PC-3 (cell line): ENCODE measurements at regions of chr9 and their contacts with region 1.

Region 1: GRCh38 chr9:37913480-37914153 is 9.7 kb upstream of the SLC25A51 start:
- DNase-seq: peak; percentile 86
- ATAC-seq: peak; percentile 76
- H3K4me3 ChIP-seq: no peak overlapping the region
- H3K27ac ChIP-seq: peak overlapping the region; percentile 52
- H3K4me1 ChIP-seq: peaks cover 7% of the 10 kb centered on the region
- H3K27me3 ChIP-seq: no peaks in the 10 kb centered on the region
- CTCF ChIP-seq: peak; percentile 93

Region 2: DNA sequence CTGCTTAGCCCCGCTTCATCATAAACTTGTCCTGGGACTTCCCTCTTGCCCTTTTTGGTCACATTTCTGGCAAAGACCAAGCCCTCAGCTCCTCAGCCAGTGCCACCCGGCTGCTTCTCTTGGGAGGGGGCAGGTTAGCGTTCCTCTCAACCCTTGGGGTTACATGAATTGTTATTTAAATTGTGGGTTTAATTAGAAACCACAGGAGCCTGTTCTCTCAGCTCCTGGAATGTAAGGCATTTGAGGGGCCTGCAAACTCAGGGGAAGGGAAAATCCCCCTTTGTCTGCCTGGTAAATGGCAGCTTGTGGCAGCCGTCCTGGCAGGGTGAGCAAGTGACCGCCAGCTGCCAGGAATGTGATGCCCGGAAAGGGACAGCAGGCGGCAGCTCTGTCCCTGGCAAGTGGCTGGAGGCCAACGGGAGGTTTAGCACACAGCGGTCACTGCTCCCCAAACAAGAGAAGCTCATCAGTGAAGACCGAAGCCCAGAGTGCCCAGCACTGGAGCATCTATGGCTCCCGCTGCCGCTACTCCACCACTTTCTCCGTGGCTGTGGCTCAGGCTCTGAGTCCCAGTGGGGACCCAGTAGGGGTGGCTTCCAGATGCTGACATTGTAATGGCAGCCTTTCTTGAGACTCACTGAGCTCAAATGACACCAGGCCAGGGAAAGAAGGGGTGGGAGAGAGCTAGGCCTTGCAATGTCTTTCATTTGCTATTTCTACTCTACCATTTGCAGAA is 103.7 kb after region 1 on chr9:
- CTCF ChIA-PET with region 1: interaction called, 3 read pairs
- POLR2A ChIA-PET with region 1: no interaction called
- intact Hi-C with region 1: loop called (anchors 5 kb)
- DNase-seq: peak; percentile 60
- ATAC-seq: peak; percentile 43
- H3K4me3 ChIP-seq: peak overlapping the region; percentile 11; the same call in 1 of the 2 replicates
- H3K27ac ChIP-seq: peak overlapping the region; percentile 97
- H3K4me1 ChIP-seq: peaks cover 62% of the 10 kb centered on the region
- H3K27me3 ChIP-seq: no peaks in the 10 kb centered on the region
- CTCF ChIP-seq: peak; percentile 55

Region 3: GRCh38 chr9:38068866-38069629 is 155.4 kb after region 1 on chr9 and contains the start of gene SHB:
- CTCF ChIA-PET with region 1: no interaction called
- POLR2A ChIA-PET with region 1: interaction called, 3 read pairs
- intact Hi-C with region 1: loop called (anchors 1 kb)
- DNase-seq: peak; percentile 59
- ATAC-seq: peak; percentile 41
- H3K4me3 ChIP-seq: peak within 1 kb of the TSS; percentile 95
- H3K27ac ChIP-seq: peak within 1 kb of the TSS; percentile 77
- H3K4me1 ChIP-seq: peaks cover 34% of the 10 kb centered on the region
- H3K27me3 ChIP-seq: no peaks in the 10 kb centered on the region
- CTCF ChIP-seq: 0 out of 2 replicates have a peak, but pooled peaks have one; percentile 17
- total RNA-seq, gene SHB: 56.4 and 77.1 TPM in 2 replicates

Region 4: DNA sequence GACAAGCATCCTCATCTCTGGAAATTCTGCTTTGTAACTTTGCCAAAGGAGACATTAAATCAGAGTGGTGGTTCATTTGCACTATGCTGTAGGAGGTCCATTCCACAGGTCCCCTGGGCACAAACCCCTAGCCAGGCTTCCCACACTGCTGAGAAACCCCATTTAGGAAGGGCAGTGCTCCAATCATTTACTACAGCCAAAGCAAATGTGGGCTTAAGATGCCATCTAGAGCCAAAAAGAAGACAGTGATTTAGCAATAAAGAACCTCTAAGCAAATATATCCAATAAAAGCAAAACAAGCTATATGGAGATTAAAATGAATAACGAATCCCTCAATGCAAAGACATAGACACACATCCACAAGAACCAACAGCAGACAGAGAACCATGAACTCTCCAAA is 349.9 kb after region 1 on chr9:
- CTCF ChIA-PET with region 1: interaction called, 3 read pairs
- POLR2A ChIA-PET with region 1: no interaction called
- intact Hi-C with region 1: loop called (anchors 2 kb)
- DNase-seq: peak; percentile 52
- ATAC-seq: peak; percentile 31; the same call in 1 of the 2 replicates
- H3K4me3 ChIP-seq: no peak overlapping the region
- H3K27ac ChIP-seq: no peak overlapping the region
- H3K4me1 ChIP-seq: no peaks in the 10 kb centered on the region
- H3K27me3 ChIP-seq: no peaks in the 10 kb centered on the region
- CTCF ChIP-seq: peak; percentile 62